HepG2 (cell line): ENCODE measurements at regions of chr2 and their contacts with region 1.

Region 1: GRCh38 chr2:187547353-187547979 is 6.8 kb downstream of the TFPI start:
- DNase-seq: no peak
- ATAC-seq: no peak
- H3K4me3 ChIP-seq: no peak overlapping the region
- H3K27ac ChIP-seq: peak overlapping the region; percentile 88
- H3K4me1 ChIP-seq: peaks cover 93% of the 10 kb centered on the region
- H3K27me3 ChIP-seq: no peaks in the 10 kb centered on the region
- CTCF ChIP-seq: no peak
- EP300 ChIP-seq: no peak; a peak in 1 of 4 replicates
- POLR2A ChIP-seq: 0 out of 4 replicates have a peak, but pooled peaks of 1 of the 2 experiments have one; percentile 20
- RAD21 ChIP-seq: no peak

Region 2: DNA sequence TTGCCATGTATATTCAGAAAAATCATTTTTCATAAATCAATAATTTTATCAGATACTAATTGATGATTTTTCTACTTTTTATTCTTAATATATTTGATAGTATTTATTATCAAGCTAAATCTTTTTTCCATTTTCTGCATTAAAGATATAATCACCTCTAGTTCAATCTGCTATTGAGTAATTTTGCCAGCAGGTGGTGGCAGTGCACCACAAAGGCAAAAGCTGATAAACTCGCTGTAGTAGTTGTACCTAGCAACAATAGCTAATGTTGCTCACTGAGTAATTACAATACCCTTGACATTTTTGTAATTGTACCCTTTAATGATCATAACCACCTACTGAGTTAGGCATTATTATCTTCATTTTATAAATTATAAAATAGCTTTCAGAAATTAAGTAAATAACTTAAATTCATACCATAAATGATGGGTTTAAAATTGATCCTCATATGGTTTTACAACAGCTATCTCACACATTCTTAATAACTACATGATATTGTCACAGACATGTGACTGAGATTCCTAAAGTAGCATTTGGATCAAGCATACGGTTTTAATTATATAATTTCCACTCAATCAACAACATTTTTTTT is 47.4 kb before region 1 on chr2:
- CTCF ChIA-PET with region 1: no interaction called
- POLR2A ChIA-PET with region 1: interaction called, 11 read pairs
- in situ Hi-C with region 1: loop called (anchors 5 kb)
- intact Hi-C with region 1: loop called (anchors 2 kb)
- DNase-seq: peak; percentile 66
- ATAC-seq: peak; percentile 72
- H3K4me3 ChIP-seq: no peak overlapping the region
- H3K27ac ChIP-seq: peak overlapping the region; percentile 45
- H3K4me1 ChIP-seq: peaks cover 44% of the 10 kb centered on the region
- H3K27me3 ChIP-seq: no peaks in the 10 kb centered on the region
- CTCF ChIP-seq: peak; percentile 81
- EP300 ChIP-seq: no peak
- POLR2A ChIP-seq: no peak
- RAD21 ChIP-seq: peak; percentile 91

Region 3: GRCh38 chr2:187509667-187510417 is 37.6 kb before region 1 on chr2:
- CTCF ChIA-PET with region 1: no interaction called
- POLR2A ChIA-PET with region 1: interaction called, 37 read pairs
- in situ Hi-C with region 1: loop called (anchors 5 kb)
- intact Hi-C with region 1: loop called (anchors 2 kb)
- DNase-seq: peak; percentile 99
- ATAC-seq: peak; percentile 91
- H3K4me3 ChIP-seq: peak overlapping the region; percentile 9 to 70 (median 56); a peak in 4 of 6 replicates
- H3K27ac ChIP-seq: peak overlapping the region; percentile 75
- H3K4me1 ChIP-seq: peaks cover 90% of the 10 kb centered on the region
- H3K27me3 ChIP-seq: no peaks in the 10 kb centered on the region; a peak in 1 of 5 replicates
- CTCF ChIP-seq: no peak
- EP300 ChIP-seq: peak; percentile 28 to 99; a peak in 2 of 4 replicates
- POLR2A ChIP-seq: no peak; a peak in 1 of 4 replicates
- RAD21 ChIP-seq: no peak

Region 4: DNA sequence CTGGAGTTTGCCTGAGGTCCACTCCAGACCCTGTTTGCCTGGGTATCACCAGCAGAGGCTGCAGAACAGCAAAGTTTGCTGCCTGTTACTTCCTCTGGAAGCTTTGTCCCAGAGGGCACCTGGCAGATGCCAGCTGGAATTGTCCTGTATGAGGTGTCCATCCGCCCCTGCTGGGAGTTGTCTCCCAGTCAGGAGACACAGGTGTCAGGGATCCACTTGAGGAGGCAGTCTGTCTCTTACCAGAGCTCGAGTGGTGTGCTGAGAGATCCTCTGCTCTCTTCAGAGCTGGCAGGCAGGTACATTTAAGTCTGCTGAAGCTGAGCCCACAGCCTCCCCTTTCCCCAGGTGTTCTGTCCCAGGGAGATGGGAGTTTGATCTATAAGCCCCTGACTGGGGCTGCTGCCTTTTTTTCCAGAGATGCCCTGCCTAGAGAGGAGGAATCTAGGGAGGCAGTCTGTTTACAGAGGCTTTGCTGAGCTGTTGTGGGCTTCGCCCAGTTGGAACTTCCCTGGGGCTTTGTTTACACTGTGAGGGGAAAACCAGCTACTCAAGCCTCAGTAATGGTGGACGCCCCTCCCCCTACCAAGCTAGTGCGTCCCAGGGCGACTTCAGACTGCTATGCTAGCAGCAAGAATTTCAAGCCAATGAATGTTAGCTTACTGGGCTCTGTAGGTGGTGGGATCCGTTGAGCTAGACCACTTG is 27.9 kb before region 1 on chr2:
- CTCF ChIA-PET with region 1: no interaction called
- POLR2A ChIA-PET with region 1: interaction called, 19 read pairs
- in situ Hi-C with region 1: no loop called
- intact Hi-C with region 1: no loop called
- DNase-seq: no peak
- ATAC-seq: peak; percentile 73
- H3K4me3 ChIP-seq: no peak overlapping the region
- H3K27ac ChIP-seq: peak overlapping the region; percentile 38
- H3K4me1 ChIP-seq: peaks cover 93% of the 10 kb centered on the region
- H3K27me3 ChIP-seq: no peaks in the 10 kb centered on the region
- CTCF ChIP-seq: no peak
- EP300 ChIP-seq: no peak
- POLR2A ChIP-seq: 0 out of 4 replicates have a peak, but pooled peaks of 1 of the 2 experiments have one; percentile 7
- RAD21 ChIP-seq: no peak

Region 5: GRCh38 chr2:187527262-187527661 is 20.2 kb before region 1 on chr2:
- CTCF ChIA-PET with region 1: no interaction called
- POLR2A ChIA-PET with region 1: interaction called, 10 read pairs
- in situ Hi-C with region 1: no loop called
- intact Hi-C with region 1: loop called (anchors 2 kb)
- DNase-seq: peak; percentile 78
- ATAC-seq: peak; percentile 71
- H3K4me3 ChIP-seq: no peak overlapping the region; a peak in 1 of 6 replicates
- H3K27ac ChIP-seq: peak overlapping the region; percentile 60
- H3K4me1 ChIP-seq: peaks cover 89% of the 10 kb centered on the region
- H3K27me3 ChIP-seq: no peaks in the 10 kb centered on the region
- CTCF ChIP-seq: no peak
- EP300 ChIP-seq: peak in 1 of 2 experiments; percentile 75; a peak in 2 of 4 replicates
- POLR2A ChIP-seq: no peak
- RAD21 ChIP-seq: no peak

Region 6: GRCh38 chr2:187567126-187567525 is 19.7 kb after region 1 on chr2:
- CTCF ChIA-PET with region 1: no interaction called
- POLR2A ChIA-PET with region 1: interaction called, 7 read pairs
- in situ Hi-C with region 1: no loop called
- intact Hi-C with region 1: loop called (anchors 2 kb)
- DNase-seq: peak; percentile 82
- ATAC-seq: peak; percentile 81
- H3K4me3 ChIP-seq: no peak overlapping the region
- H3K27ac ChIP-seq: peak overlapping the region; percentile 48
- H3K4me1 ChIP-seq: peaks cover 41% of the 10 kb centered on the region
- H3K27me3 ChIP-seq: no peaks in the 10 kb centered on the region
- CTCF ChIP-seq: no peak
- EP300 ChIP-seq: peak in 1 of 2 experiments; percentile 51; a peak in 2 of 4 replicates
- POLR2A ChIP-seq: no peak
- RAD21 ChIP-seq: no peak

Region 7: DNA sequence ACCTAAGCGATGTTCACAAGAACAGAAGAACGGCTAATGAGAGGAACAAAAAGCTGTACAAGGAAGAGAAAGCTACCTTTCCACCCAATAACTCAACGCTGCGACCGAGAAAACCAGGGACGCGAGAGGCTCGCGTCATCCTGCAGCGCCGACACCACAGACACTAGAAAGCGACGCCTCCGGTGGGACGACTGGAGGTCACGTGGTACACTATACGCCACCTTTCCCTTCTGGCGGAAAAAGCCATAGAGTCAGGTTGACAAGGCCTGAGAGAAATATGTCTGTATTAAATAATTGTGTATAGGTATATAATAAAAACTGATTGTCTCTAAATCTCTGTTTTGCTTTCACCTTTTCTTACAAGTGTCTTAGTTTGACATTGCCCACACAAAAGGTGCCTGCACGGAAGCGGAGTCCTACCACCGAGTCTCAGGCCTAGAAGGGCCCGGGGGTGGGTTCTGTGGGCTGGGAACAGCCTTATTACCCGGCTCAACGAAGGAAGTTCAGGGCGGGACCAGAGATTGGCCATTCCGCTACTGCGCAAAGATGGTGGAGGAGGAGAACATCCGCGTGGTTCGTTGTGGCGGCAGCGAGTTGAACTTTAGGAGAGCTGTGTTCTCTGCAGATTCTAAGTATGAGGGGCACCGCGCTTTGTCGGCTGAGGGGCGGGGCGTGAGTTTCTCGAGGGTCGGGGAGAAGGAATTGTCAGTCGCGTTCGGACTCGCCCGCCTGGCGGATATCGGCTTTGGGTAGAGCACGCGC is 1893.7 kb after region 1 on chr2 and contains the start of gene WDR75:
- CTCF ChIA-PET with region 1: no interaction called
- POLR2A ChIA-PET with region 1: no interaction called
- in situ Hi-C with region 1: loop called (anchors 25 kb)
- intact Hi-C with region 1: no loop called
- DNase-seq: peak; percentile 95
- ATAC-seq: peak; percentile 99
- H3K4me3 ChIP-seq: peak within 1 kb of the TSS; percentile 90 to 94 (median 93)
- H3K27ac ChIP-seq: peak within 1 kb of the TSS; percentile 82
- H3K4me1 ChIP-seq: peaks cover 45% of the 10 kb centered on the region
- H3K27me3 ChIP-seq: no peaks in the 10 kb centered on the region; a peak in 1 of 5 replicates
- CTCF ChIP-seq: no peak
- EP300 ChIP-seq: peak in 1 of 2 experiments; percentile 52; a peak in 2 of 4 replicates
- POLR2A ChIP-seq: peak; percentile 95
- RAD21 ChIP-seq: peak; percentile 27
- total RNA-seq, gene WDR75: 74.1 and 106 TPM in 2 replicates